Prostate gland (tissue), 2 donors: ENCODE measurements at regions of chr13 and their contacts with region 1.

Region 1: GRCh38 chr13:40069173-40070044 is 413.9 kb downstream of the COG6 start:
- DNase-seq: peak; percentile 66
- H3K4me3 ChIP-seq: no peak overlapping the region
- H3K27ac ChIP-seq: no peak overlapping the region
- H3K4me1 ChIP-seq: no peaks in the 10 kb centered on the region
- H3K27me3 ChIP-seq: no peaks in the 10 kb centered on the region
- CTCF ChIP-seq: peak; percentile 64 to 89 (median 82)
- POLR2A ChIP-seq: no peak

Region 2: DNA sequence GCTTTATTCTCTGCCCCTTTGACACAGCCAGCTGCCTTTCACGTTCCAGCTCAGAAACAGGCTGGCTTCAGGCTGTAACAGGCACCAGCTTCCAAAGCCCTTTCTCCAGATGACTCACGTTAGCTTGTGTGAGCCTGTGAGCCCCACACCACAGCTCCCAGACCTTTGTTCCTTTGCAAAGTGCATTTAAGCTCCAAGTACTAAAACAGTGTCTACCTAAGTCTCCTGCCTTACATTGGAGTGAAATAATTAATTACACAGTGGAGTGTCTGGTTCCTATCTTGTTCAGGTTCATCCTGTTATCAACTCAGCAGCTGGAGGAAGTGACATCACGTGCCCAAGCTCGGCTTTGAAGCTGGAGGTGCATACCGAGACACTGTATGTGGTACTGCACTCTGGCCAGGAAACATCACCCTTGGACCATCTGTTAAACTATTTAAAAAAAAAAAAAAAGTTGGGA is 121.3 kb after region 1 on chr13:
- intact Hi-C with region 1: loop called (anchors 10 kb)
- DNase-seq: peak; percentile 30
- H3K4me3 ChIP-seq: no peak overlapping the region
- H3K27ac ChIP-seq: peak overlapping the region; percentile 42 to 50
- H3K4me1 ChIP-seq: no peaks in the 10 kb centered on the region
- H3K27me3 ChIP-seq: no peaks in the 10 kb centered on the region
- CTCF ChIP-seq: no peak
- POLR2A ChIP-seq: no peak